ENCODE measurements at regions of chr17 and their contacts with region 1.

Region 1: GRCh38 chr17:61002316-61002736 is 324.7 kb downstream of the BCAS3 start:
- DNase-seq: peak; percentile 51
- H3K4me3 Mint-ChIP-seq: no peak overlapping the region
- H3K27ac Mint-ChIP-seq: no peak overlapping the region
- H3K4me1 Mint-ChIP-seq: no peaks in the 10 kb centered on the region
- H3K27me3 Mint-ChIP-seq: no peaks in the 10 kb centered on the region
- CTCF ChIP-seq: peak; percentile 56

Region 2: GRCh38 chr17:61389670-61390478 is 387.5 kb after region 1 on chr17:
- CTCF ChIA-PET with region 1: interaction called, 5 read pairs
- POLR2A ChIA-PET with region 1: no interaction called
- intact Hi-C with region 1: loop called (anchors 2 kb)
- DNase-seq: peak; percentile 52
- H3K4me3 Mint-ChIP-seq: no peak overlapping the region
- H3K27ac Mint-ChIP-seq: no peak overlapping the region
- H3K4me1 Mint-ChIP-seq: no peaks in the 10 kb centered on the region
- H3K27me3 Mint-ChIP-seq: no peaks in the 10 kb centered on the region
- CTCF ChIP-seq: peak; percentile 84

Region 3: DNA sequence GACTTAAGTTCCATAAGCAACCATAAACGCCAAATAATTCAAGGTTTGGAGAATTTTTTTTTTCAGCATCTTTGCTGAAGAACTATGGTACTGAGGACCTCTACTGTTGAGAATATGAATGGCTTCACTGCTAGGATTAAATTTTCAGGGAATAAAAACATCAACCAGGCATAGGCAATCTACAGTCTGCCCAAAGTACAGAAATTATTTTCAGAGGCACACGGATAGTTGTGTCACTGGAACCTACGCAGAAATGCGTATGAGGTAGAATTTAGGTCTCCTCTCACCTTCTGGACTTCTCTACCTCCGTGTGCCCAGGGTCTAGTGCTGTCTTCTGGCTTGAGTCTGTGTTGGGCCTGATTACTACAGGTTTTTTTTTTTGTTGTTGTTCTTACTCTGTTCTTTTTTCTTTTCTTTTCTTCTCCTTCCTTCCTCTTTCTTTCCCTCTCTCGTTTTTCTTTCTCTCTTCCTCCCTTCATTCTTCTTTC is 549.0 kb after region 1 on chr17:
- CTCF ChIA-PET with region 1: interaction called, 3 read pairs
- POLR2A ChIA-PET with region 1: no interaction called
- intact Hi-C with region 1: loop called (anchors 10 kb)
- DNase-seq: peak; percentile 54
- H3K4me3 Mint-ChIP-seq: no peak overlapping the region
- H3K27ac Mint-ChIP-seq: no peak overlapping the region
- H3K4me1 Mint-ChIP-seq: no peaks in the 10 kb centered on the region
- H3K27me3 Mint-ChIP-seq: peaks cover 42% of the 10 kb centered on the region
- CTCF ChIP-seq: peak; percentile 66

Measured in MCF 10A (cell line).